ENCODE measurements at regions of chr18 and their contacts with region 1.

Region 1: GRCh38 chr18:49601211-49601610 is 39.4 kb downstream of the LIPG start:
- DNase-seq: no peak
- ATAC-seq: no peak
- H3K4me3 Mint-ChIP-seq: no peak overlapping the region
- H3K27ac Mint-ChIP-seq: no peak overlapping the region
- H3K4me1 Mint-ChIP-seq: peaks cover 5% of the 10 kb centered on the region
- H3K27me3 Mint-ChIP-seq: peaks cover 15% of the 10 kb centered on the region

Region 2: GRCh38 chr18:49561289-49562193 is 39.7 kb before region 1 on chr18 and contains the start of gene LIPG:
- CTCF ChIA-PET with region 1: no interaction called
- POLR2A ChIA-PET with region 1: no interaction called
- intact Hi-C with region 1: loop called in 1 of 2 experiments (anchors 1 kb)
- DNase-seq: peak; percentile 79
- ATAC-seq: peak; percentile 86
- H3K4me3 Mint-ChIP-seq: peak within 1 kb of the TSS; percentile 63
- H3K27ac Mint-ChIP-seq: peak within 1 kb of the TSS; percentile 49
- H3K4me1 Mint-ChIP-seq: peaks cover 32% of the 10 kb centered on the region
- H3K27me3 Mint-ChIP-seq: peaks cover 59% of the 10 kb centered on the region
- total RNA-seq, gene LIPG: 0.71 to 0.79 TPM

Measured in activated CD4-positive, alpha-beta T cell treated with anti-CD3 and anti-CD28 coated beads for 36 hours (primary cell).